ENCODE measurements at regions of chr16 and their contacts with region 1.

Region 1: GRCh38 chr16:58119509-58119845 is 9.7 kb downstream of the CFAP20 start:
- DNase-seq: no peak
- H3K4me3 ChIP-seq: no peak overlapping the region
- H3K27ac ChIP-seq: peak overlapping the region in 1 of 2 experiments; percentile 60; a peak in 2 of 4 replicates
- H3K4me1 ChIP-seq: peaks cover 30 to 71% of the 10 kb centered on the region in 2 experiments
- H3K27me3 ChIP-seq: no peaks in the 10 kb centered on the region
- CTCF ChIP-seq: no peak
- EP300 ChIP-seq: no peak
- RAD21 ChIP-seq: no peak

Region 2: GRCh38 chr16:58000706-58001676 is 118.5 kb before region 1 on chr16 and contains the start of gene USB1:
- CTCF ChIA-PET with region 1: interaction called, 19 read pairs
- POLR2A ChIA-PET with region 1: no interaction called
- DNase-seq: peak; percentile 98
- H3K4me3 ChIP-seq: peak within 1 kb of the TSS; percentile 88 to 94
- H3K27ac ChIP-seq: peak within 1 kb of the TSS; percentile 76 to 88
- H3K4me1 ChIP-seq: peaks cover 0 to 18% of the 10 kb centered on the region in 2 experiments; a peak in 2 of 4 replicates
- H3K27me3 ChIP-seq: no peaks in the 10 kb centered on the region
- CTCF ChIP-seq: peak; percentile 57
- EP300 ChIP-seq: no peak
- RAD21 ChIP-seq: peak; percentile 66
- polyA plus RNA-seq, gene USB1: 87.3 and 94.1 TPM in 2 replicates

Region 3: GRCh38 chr16:58018804-58019203 is 100.7 kb before region 1 on chr16:
- CTCF ChIA-PET with region 1: interaction called, 123 read pairs
- POLR2A ChIA-PET with region 1: interaction called, 49 read pairs
- DNase-seq: peak; percentile 13
- H3K4me3 ChIP-seq: no peak overlapping the region
- H3K27ac ChIP-seq: no peak overlapping the region
- H3K4me1 ChIP-seq: peaks cover 13 to 31% of the 10 kb centered on the region in 2 experiments
- H3K27me3 ChIP-seq: no peaks in the 10 kb centered on the region
- CTCF ChIP-seq: no peak
- EP300 ChIP-seq: no peak
- RAD21 ChIP-seq: no peak

Region 4: GRCh38 chr16:58032710-58033293 is 86.7 kb before region 1 on chr16:
- CTCF ChIA-PET with region 1: interaction called, 75 read pairs
- POLR2A ChIA-PET with region 1: interaction called, 24 read pairs
- DNase-seq: peak; percentile 94
- H3K4me3 ChIP-seq: no peak overlapping the region; a peak in 1 of 4 replicates
- H3K27ac ChIP-seq: peak overlapping the region in 1 of 2 experiments; percentile 96; a peak in 2 of 4 replicates
- H3K4me1 ChIP-seq: peaks cover 0 to 68% of the 10 kb centered on the region in 2 experiments; a peak in 1 of 4 replicates
- H3K27me3 ChIP-seq: no peaks in the 10 kb centered on the region
- CTCF ChIP-seq: no peak
- EP300 ChIP-seq: peak in 1 of 2 experiments; percentile 86; a peak in 2 of 4 replicates
- RAD21 ChIP-seq: peak; percentile 3; the same call in 1 of the 2 replicates

Region 5: GRCh38 chr16:58098207-58099096 is 21.0 kb before region 1 on chr16:
- CTCF ChIA-PET with region 1: interaction called, 23 read pairs
- POLR2A ChIA-PET with region 1: interaction called, 3 read pairs
- DNase-seq: no peak
- H3K4me3 ChIP-seq: no peak overlapping the region
- H3K27ac ChIP-seq: no peak overlapping the region
- H3K4me1 ChIP-seq: no peaks in the 10 kb centered on the region; a peak in 1 of 4 replicates
- H3K27me3 ChIP-seq: no peaks in the 10 kb centered on the region
- CTCF ChIP-seq: no peak
- EP300 ChIP-seq: no peak
- RAD21 ChIP-seq: no peak

Region 6: GRCh38 chr16:58170223-58170622 is 50.7 kb after region 1 on chr16:
- CTCF ChIA-PET with region 1: no interaction called
- POLR2A ChIA-PET with region 1: no interaction called
- DNase-seq: no peak
- H3K4me3 ChIP-seq: no peak overlapping the region
- H3K27ac ChIP-seq: no peak overlapping the region
- H3K4me1 ChIP-seq: no peaks in the 10 kb centered on the region
- H3K27me3 ChIP-seq: no peaks in the 10 kb centered on the region
- CTCF ChIP-seq: no peak
- EP300 ChIP-seq: no peak
- RAD21 ChIP-seq: no peak